GM18951 (cell line): ENCODE measurements at regions of chr6 and their contacts with region 1.

Region 1: DNA sequence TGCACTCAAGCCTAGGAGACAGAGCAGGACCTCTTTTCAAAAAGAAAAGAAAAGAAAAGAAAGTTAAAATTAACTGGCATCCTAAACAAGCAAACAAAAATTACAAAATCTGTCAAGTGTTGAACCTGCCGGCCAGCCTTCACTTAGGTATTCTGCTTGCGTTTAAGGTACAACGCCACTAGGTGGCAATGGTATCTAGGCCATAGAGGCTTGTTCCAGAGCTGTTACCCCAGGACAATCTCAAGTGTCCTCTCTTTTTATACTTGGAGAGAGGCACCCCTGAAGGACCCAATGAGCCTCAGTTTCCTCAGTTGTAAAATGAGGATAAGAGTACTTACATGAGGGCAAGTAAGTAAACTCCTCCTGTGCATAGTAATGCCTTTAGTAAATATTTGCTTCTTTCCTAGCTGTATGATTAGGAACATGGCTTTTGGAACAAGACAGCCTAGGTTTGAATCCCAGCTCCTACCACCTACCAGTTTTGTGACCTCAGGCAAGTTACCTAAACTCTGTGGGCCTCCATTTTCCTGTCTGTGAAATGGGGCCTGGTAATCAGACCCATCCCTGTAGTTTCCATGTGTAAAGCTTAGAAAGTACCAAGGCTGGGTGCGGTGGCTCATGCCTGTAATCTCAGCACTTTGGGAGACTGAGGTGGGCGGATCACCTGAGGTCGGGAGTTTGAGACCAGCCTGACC is 5.8 kb upstream of the PACSIN1 start:
- POLR2A ChIP-seq: no peak

Region 2: DNA sequence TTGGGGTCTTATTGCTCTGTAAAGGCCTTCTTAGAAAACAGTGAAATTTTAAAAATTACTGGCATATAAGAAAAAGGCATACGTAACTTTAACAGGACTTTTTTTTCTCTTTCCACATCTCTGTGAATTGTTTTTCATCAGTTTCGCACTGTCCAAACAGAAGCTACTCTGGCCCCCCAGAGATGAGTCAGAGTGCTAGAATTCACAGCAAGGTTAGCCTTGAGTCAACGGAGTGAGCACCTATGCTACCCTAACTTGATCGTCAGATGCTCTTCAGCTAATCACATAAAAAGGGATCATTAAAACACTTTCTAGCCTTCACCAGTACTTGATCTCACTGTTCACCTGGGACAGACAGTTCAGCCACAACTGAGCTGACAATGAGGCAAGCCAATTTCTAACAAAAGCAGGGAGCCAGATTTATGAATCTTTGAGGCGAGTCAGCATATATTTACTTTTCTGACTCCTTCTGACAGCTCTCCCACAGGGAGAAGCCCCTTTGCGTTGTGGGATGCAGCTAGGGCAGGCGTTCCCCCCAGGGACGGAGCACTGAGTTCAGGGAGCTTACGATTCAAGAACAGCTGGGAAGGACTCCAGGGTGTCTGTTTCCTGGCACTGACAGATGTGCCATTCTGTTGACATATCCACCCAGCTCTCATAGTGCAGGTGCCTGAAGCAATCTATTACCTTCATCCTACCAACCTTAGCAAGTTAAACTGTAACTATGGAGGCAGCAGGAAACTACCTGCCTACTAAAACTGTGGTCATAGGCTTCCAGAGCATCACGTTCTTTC is 142.5 kb after region 1 on chr6:
- in situ Hi-C with region 1: loop called (anchors 10 kb)
- POLR2A ChIP-seq: no peak